Prostate gland (tissue), 2 donors: ENCODE measurements at regions of chr14 and their contacts with region 1.

Region 1: GRCh38 chr14:34227834-34228649 is 234.0 kb downstream of the SPTSSA start:
- DNase-seq: peak; percentile 56
- H3K4me3 ChIP-seq: no peak overlapping the region
- H3K27ac ChIP-seq: no peak overlapping the region
- H3K4me1 ChIP-seq: no peaks in the 10 kb centered on the region
- H3K27me3 ChIP-seq: no peaks in the 10 kb centered on the region
- CTCF ChIP-seq: peak; percentile 36 to 84 (median 72)
- POLR2A ChIP-seq: no peak

Region 2: GRCh38 chr14:33792720-33793368 is 435.2 kb before region 1 on chr14:
- intact Hi-C with region 1: no loop called
- DNase-seq: peak; percentile 84
- H3K4me3 ChIP-seq: peak overlapping the region in 1 of 2 donors; percentile 0
- H3K27ac ChIP-seq: no peak overlapping the region
- H3K4me1 ChIP-seq: peaks cover 4% of the 10 kb centered on the region
- H3K27me3 ChIP-seq: no peaks in the 10 kb centered on the region
- CTCF ChIP-seq: peak; percentile 83 to 95 (median 88)
- POLR2A ChIP-seq: no peak

Region 3: DNA sequence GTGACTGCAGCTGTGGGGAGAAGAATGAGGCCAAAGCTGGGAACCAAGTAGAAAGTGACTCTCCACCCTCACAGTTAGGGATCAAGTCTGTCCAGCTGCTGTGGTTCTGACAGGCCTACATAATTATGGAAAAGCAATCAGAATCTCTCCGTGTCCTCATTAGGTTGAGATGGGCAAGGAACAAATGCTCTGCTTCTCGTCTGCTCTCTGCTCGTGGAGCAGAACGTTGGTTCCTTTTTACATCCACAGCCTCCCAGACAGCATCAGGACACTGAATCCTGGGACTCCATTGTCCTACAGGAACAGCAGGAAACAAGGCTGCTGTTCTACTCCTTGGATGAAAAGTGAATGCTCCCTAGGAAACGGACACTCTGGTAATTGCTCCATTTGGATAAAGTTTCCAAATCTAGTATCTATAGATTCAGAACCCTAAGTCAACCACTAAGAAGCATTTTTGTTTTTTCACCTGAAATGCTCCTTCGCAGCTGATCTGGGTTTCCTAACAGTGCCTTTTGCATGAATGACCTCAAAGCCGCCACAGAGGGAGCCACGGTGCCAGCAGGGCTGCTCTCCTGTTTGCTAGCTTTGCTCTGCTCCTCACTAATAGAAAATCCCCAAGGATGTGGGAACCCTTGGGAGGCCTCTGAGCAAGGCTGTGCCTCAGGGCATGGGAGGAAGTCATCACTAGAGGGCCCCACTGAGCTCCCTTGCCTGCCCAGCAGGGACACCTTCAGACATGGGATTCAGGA is 379.2 kb before region 1 on chr14:
- intact Hi-C with region 1: loop called (anchors 5 kb)
- DNase-seq: peak; percentile 21
- H3K4me3 ChIP-seq: no peak overlapping the region
- H3K27ac ChIP-seq: no peak overlapping the region
- H3K4me1 ChIP-seq: no peaks in the 10 kb centered on the region
- H3K27me3 ChIP-seq: no peaks in the 10 kb centered on the region
- CTCF ChIP-seq: peak in 3 of 4 experiments; percentile 36 to 45 (median 44)
- POLR2A ChIP-seq: no peak

Region 4: GRCh38 chr14:34300882-34301734 is 73.1 kb after region 1 on chr14:
- intact Hi-C with region 1: no loop called
- DNase-seq: no peak
- H3K4me3 ChIP-seq: no peak overlapping the region
- H3K27ac ChIP-seq: no peak overlapping the region
- H3K4me1 ChIP-seq: no peaks in the 10 kb centered on the region
- H3K27me3 ChIP-seq: no peaks in the 10 kb centered on the region
- CTCF ChIP-seq: peak; percentile 10 to 78 (median 54)
- POLR2A ChIP-seq: no peak